HEK293T (cell line): ENCODE measurements at regions of chrX and their contacts with region 1.

Region 1: DNA sequence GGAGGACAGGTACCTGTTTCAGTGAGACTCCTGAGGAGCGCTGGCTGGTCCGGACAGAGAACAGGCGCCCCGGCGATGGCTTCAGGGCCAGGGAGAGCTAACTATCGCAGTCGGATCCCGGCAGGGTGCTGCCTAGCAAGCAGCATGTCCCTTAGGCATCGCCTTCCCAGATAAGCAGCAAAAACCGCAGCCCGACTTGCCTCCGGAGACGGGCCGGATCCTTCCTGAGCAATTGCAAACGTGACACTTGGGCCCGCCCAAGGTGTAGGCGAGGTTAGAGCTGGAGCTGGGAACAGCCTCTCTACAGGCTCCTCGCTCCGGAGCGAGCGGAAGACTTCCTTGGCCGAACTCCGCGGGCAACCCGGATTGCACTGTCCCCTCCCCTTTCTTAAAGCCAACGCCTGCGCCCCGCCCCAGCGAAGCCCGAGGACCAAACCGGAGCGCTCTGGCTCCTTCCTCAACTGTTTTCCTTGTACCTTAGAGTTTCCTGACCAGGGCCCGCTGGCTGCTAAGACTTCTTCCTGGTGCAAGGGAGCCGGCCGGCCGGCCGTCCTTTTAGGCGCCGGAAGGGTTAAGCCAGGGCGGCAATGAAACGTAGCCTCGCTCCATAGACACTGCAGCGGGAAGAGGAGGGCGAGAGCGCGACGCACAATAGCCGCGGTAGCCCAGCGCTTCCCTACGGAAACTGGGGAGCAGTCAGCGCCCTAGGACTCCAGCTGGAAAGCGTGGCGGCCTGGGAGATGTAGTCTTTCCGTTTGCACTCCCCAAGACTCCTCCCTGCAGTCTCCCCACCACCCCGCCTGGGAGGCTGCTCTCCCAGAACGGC is at the start of gene OPHN1:
- DNase-seq: peak; percentile 72

Region 2: DNA sequence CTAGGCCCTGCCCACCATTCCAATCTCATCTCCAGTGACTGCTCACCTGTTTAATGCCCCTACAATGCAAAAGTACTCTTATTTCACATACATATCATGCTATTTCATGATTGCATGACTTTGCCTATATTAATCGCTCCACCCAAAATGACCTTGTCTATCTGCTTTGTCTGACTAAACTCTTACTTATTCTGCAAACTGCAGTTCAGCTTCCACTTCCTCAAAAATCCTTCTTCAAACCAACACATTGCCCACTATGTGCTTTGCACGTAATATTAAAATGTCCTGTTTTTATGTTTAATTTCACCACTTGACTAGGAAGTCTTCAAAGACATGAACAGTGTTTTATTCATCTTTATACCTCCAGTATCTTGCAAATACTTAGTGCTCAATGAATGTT is 229.7 kb before region 1 on chrX:
- CTCF ChIA-PET with region 1: no interaction called
- POLR2A ChIA-PET with region 1: no interaction called
- DNase-seq: no peak

Region 3: DNA sequence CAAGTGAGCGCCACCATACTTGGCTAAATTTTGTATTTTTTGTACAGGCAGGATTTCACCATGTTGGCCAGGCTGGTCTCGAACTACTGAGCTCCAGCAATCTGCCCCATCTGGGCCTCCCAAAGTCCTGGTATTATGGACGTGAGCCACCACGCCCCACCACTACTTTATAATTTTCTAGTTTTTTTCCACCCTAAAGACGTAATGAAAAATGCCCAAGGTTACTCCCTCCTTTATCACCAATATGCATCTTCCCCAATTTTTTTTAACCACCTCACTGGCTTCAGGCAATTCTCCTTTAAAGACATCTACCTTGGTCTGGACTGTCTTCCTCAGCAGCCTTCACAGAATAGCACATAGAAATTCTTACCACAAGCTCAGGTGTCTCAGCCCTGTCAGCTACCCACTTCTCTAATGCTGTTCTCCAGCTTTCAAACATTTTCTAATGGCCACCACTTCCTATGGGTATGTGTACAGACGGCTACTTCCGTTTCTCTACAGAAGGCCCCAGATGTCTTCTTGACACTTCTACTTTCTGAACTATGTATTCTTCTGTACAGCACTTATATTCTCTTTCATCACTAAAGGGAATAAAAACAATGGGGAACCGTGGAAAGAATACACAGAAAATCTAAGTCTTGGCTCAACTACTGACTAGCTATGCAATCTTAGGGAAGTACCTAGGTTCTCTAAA is 13.5 kb before region 1 on chrX:
- CTCF ChIA-PET with region 1: no interaction called
- POLR2A ChIA-PET with region 1: interaction called, 11 read pairs
- DNase-seq: no peak

Region 4: DNA sequence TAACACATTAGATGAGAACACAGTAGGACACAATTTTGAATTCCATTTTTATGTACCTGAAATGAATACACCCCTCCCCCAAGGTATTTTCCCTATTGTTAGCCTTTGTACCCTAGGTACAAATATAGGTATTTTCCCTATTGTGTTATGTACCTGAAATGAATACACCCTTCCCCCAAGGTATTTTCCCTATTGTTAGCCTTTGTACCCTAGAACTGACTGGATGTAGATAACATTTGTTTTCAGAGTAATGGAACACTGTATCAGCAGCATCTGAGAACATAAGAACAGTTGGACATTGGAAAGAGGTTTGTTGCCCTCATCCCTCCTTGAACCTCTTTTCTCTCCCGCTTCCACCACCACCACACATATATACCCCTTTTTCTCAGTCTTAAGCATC is 103.1 kb after region 1 on chrX:
- CTCF ChIA-PET with region 1: no interaction called
- POLR2A ChIA-PET with region 1: no interaction called
- DNase-seq: no peak

Region 5: DNA sequence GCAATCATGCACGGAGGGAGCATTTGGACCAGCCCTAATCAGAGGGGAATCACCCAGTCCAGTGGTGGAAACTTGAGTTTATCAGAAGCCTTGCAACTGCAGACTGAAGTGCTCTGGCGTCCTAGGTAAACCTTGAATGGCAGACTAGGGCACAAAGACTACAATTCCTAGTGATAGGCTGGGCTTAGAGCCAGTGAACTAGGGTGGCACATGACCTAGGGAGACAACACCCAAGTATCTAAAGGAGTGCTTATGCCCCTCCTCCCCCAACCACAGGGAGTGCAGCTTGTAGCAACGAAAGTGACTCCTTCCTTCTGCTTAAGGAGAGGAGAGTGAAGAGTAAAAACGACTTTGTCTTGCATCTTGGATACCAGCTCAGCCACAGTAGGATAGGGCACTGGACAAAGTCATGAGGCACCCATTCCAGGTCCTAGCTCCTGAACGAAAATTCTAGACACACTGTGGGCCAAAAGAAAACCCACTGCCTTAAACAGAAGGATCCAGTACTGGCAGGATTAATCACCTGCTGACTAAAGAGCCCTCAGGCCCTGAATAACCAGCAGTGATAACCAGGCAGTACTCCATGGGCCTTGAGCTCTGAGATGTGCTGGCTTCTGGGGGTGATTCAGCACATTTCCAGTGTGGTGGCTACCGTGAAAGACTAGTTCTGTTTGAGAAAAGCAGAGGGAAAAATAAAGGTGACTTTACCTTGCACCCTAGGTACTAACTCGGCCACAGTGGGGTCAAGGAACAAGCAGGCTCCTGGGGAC is 155.4 kb after region 1 on chrX:
- CTCF ChIA-PET with region 1: no interaction called
- POLR2A ChIA-PET with region 1: no interaction called
- DNase-seq: no peak